Ovary (tissue), 10 donors: ENCODE measurements at regions of chr2 and their contacts with region 1.

Region 1: DNA sequence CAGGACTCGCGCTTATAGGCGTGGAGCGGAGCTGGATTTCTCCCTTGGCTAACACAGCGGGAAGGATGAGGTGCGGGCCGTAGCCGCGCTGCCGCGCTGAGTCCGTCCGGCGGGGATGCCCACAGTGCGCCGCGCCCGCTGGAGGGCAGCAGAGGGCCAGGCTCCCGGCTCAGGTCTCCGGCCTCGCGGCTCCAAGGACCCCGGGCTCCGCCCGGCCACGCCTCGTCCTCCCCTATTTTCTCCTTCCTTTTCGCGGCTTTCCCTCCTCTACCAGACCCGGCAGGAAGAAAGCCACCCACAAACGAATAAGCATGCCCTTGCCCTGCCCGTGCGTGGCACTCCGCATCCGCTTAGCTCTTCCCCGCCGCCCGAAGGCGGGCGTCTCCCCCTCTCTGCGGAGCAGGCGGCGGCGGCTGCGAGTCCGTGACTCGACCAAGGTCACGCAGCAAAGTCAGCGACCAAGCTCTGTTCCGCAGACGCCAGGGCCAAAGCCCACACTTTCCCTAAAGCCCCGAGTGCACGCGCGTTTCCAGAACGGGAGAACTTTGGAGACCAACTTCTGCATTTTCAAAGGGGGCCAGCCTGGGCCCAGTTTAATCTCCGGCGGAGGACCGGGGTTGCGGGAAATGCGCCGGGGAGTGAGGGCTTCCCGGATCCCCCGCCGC is 48.6 kb downstream of the KCNIP3 start:
- DNase-seq: peak; percentile 86 to 95 (median 87)
- H3K4me3 ChIP-seq: peak overlapping the region; percentile 69
- H3K27ac ChIP-seq: peak overlapping the region in 1 of 2 donors; percentile 78
- H3K4me1 ChIP-seq: peaks cover 8% of the 10 kb centered on the region
- H3K27me3 ChIP-seq: no peaks in the 10 kb centered on the region
- CTCF ChIP-seq: peak; percentile 82 to 96 (median 84)
- EP300 ChIP-seq: no peak
- POLR2A ChIP-seq: no peak

Region 2: GRCh38 chr2:95091885-95092555 is 253.7 kb before region 1 on chr2:
- intact Hi-C with region 1: no loop called
- DNase-seq: no peak
- H3K4me3 ChIP-seq: no peak overlapping the region
- H3K27ac ChIP-seq: no peak overlapping the region
- H3K4me1 ChIP-seq: no peaks in the 10 kb centered on the region
- H3K27me3 ChIP-seq: no peaks in the 10 kb centered on the region
- CTCF ChIP-seq: no peak
- EP300 ChIP-seq: no peak
- POLR2A ChIP-seq: no peak

Region 3: DNA sequence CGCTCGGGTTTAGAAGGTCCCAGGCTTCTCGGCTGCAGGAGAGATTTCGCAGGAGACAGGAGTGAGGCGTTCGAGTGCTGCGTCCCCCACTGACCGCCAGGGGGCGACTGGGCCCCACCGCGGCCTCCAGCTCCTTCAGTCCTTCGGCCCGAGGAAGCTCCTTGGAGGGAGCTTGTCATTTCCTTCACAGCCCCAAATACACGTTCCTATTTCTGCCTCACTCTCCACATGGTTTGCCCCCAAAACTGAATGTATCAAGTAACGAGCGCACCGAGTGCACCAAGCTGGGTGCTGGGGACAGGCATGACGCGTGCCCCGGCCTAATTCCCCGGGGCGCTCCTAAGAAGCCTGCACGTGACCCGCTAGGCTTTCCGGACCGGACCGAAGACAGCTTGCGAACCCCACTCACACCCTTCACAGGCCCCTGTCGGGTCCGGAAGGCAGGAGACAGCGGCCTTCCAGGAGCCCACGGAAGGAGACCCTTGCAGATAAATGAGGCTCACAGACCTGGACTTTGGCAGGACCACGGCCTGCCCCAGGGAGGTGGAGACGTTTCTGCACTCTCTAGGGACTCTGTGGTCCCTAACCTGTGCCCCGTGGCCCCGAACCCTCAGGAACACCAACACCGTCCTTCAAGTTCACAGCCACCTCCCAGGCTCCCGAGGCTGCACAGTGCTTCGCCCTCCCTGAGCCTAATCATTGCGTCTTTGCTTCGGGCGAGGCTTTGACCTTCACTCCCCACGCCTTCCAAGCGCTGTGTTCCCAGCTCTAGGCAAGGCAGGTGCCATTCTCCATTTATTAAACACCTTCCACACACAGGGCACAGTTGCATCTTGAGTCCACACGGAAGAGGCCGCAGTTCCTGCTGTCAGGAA is 43.8 kb after region 1 on chr2:
- intact Hi-C with region 1: loop called in 1 of 4 experiments (anchors 5 kb)
- DNase-seq: peak; percentile 46 to 85 (median 69)
- H3K4me3 ChIP-seq: no peak overlapping the region
- H3K27ac ChIP-seq: no peak overlapping the region
- H3K4me1 ChIP-seq: peaks cover 30% of the 10 kb centered on the region
- H3K27me3 ChIP-seq: no peaks in the 10 kb centered on the region
- CTCF ChIP-seq: peak; percentile 49 to 66 (median 58)
- EP300 ChIP-seq: no peak
- POLR2A ChIP-seq: no peak